ENCODE measurements at regions of chr16 and their contacts with region 1.

Region 1: DNA sequence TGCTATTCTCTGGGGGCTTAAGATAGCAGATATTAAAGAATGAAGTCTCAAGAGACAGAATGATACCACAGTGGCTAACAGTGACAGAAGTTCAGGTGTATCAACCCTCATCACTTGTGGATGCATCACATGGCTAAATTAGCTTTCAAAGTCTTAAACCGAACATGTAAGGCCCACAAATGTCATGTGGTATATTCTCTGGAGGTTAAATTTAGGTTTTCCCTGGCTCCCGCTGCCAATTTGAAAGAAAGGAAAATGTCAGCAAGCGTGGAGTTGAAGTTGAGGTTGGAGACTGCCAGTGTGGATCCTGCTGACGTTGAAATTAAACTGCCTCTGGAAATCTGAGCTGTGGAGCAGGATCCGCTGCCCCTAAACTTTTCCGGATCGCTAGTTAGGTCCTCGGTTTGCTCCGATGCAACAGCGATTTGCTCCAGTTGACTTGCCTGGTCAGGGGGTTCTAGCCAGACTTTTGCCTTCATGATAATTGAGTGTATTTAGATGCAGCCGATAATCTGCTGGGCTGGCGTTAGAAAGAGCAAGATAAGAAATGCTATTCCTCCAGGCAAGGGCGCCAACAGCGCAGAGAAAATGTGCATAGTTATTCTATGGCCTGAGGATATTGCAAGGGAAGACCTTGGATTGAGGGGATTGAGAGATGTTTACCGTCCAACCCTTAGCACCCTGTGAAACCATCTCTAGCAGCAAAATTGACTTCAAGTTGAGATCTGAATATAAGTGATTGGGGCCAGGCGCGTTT is 443.9 kb downstream of the TMEM114 start:
- DNase-seq: no peak
- H3K4me3 ChIP-seq: no peak overlapping the region
- H3K27ac ChIP-seq: no peak overlapping the region
- H3K4me1 ChIP-seq: no peaks in the 10 kb centered on the region
- H3K27me3 ChIP-seq: no peaks in the 10 kb centered on the region
- CTCF ChIP-seq: no peak
- POLR2A ChIP-seq: no peak

Region 2: DNA sequence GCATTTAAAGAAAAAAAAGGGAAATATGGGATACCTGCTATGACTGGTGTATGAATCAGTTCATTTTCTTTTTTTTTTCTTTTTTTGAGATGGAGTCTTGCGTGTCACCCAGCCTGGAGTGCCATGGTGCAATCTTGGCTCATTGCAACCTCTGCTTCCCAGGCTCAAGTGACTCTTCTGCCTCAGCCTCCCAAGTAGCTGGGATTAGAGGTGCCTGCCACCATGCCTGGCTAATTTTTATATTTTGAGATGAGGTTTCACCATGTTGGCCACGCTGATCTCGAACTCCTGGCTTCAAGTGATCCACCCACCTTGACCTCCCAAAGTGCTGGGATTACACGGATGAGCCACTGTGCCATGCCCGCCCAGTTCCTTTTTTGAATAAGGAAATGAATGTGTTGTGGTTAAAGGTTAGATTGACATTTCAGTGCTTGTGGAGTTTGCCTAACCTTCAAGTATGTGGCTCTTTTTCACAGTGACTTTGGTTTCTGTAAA is 952.7 kb after region 1 on chr16:
- intact Hi-C with region 1: no loop called
- DNase-seq: no peak
- H3K4me3 ChIP-seq: peak overlapping the region in 1 of 3 donors; percentile 22
- H3K27ac ChIP-seq: peak overlapping the region; percentile 50 to 74
- H3K4me1 ChIP-seq: peaks cover 6 to 25% of the 10 kb centered on the region in 2 donors
- H3K27me3 ChIP-seq: no peaks in the 10 kb centered on the region
- CTCF ChIP-seq: no peak
- POLR2A ChIP-seq: no peak

Region 3: GRCh38 chr16:9966569-9967157 is 1820.2 kb after region 1 on chr16:
- intact Hi-C with region 1: loop called (anchors 10 kb)
- DNase-seq: no peak
- H3K4me3 ChIP-seq: no peak overlapping the region
- H3K27ac ChIP-seq: no peak overlapping the region
- H3K4me1 ChIP-seq: no peaks in the 10 kb centered on the region
- H3K27me3 ChIP-seq: no peaks in the 10 kb centered on the region
- CTCF ChIP-seq: no peak
- POLR2A ChIP-seq: no peak